ENCODE measurements at regions of chr11 and their contacts with region 1.

Region 1: GRCh38 chr11:122108192-122108799 is 7.7 kb downstream of the BLID start:
- DNase-seq: peak; percentile 38
- ATAC-seq: no peak
- H3K4me3 Mint-ChIP-seq: no peak overlapping the region
- H3K27ac Mint-ChIP-seq: no peak overlapping the region
- H3K4me1 Mint-ChIP-seq: no peaks in the 10 kb centered on the region
- H3K27me3 Mint-ChIP-seq: peaks cover 12% of the 10 kb centered on the region

Region 2: DNA sequence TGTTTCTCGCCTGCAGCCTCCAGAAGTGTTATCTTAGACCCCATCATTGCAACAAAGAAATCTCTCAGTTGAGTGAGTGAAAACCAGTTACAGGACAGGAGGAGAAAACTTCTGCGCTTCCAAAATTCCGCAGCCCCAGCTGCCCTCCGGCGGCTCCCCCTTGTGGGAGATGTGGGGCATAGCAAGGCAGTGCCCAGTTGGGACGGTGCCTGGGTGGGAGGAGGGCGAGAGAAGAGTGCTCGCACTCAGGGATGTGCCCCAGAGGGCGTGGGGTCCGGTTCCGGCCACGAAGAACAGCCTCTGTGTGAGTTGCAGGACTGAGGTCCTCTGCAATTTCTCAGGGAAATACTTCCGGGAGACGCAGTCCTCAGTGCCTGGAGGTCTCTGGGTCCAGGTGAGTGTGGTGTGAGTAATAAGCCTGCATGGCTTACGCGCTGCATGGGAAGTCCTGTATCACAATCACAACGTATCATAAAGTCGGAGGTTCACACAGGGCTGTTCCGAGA is 94.7 kb after region 1 on chr11:
- CTCF ChIA-PET with region 1: interaction called, 4 read pairs
- POLR2A ChIA-PET with region 1: no interaction called
- intact Hi-C with region 1: loop called in 1 of 2 experiments (anchors 10 kb)
- DNase-seq: peak; percentile 69
- ATAC-seq: peak; percentile 74
- H3K4me3 Mint-ChIP-seq: no peak overlapping the region
- H3K27ac Mint-ChIP-seq: no peak overlapping the region
- H3K4me1 Mint-ChIP-seq: no peaks in the 10 kb centered on the region
- H3K27me3 Mint-ChIP-seq: peaks cover 34% of the 10 kb centered on the region

Region 3: DNA sequence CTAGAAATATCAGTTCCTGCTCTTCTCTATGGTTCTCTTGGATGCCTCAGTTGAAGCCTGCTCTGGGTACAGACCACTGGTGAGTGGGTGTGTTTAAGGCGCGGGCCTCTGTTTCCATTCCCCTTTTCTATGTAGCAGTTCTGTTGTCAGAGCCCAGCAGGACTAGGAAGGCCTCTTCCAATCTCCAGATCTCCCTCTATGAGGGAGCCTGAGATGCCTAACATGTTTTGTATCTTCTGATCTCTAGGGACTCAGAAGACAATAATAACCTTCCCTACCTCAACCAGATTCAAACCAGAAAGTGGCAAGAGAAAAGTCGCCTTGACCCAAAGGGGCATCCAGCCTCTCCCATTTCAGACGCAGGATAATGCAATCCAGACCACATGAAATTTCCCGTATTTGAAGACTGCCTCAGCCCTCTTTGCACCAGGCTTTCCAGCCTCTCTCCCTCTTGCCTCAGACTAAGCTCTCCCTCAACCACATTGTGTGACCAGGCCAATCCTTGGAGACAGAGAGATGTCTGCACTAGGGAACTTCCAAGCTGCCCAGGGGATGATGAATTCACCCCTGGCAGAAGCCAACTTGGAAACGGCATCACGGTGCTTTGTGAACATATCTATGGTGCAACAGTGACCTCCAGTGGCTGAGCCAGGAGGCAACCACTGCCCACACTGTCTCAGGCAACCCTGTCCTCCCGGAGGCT is 397.2 kb after region 1 on chr11:
- CTCF ChIA-PET with region 1: no interaction called
- POLR2A ChIA-PET with region 1: no interaction called
- intact Hi-C with region 1: loop called in 1 of 2 experiments (anchors 10 kb)
- DNase-seq: peak; percentile 78
- ATAC-seq: peak; percentile 77
- H3K4me3 Mint-ChIP-seq: no peak overlapping the region
- H3K27ac Mint-ChIP-seq: no peak overlapping the region
- H3K4me1 Mint-ChIP-seq: no peaks in the 10 kb centered on the region
- H3K27me3 Mint-ChIP-seq: peaks cover 33% of the 10 kb centered on the region